ENCODE measurements at regions of chr12 and their contacts with region 1.

Region 1: DNA sequence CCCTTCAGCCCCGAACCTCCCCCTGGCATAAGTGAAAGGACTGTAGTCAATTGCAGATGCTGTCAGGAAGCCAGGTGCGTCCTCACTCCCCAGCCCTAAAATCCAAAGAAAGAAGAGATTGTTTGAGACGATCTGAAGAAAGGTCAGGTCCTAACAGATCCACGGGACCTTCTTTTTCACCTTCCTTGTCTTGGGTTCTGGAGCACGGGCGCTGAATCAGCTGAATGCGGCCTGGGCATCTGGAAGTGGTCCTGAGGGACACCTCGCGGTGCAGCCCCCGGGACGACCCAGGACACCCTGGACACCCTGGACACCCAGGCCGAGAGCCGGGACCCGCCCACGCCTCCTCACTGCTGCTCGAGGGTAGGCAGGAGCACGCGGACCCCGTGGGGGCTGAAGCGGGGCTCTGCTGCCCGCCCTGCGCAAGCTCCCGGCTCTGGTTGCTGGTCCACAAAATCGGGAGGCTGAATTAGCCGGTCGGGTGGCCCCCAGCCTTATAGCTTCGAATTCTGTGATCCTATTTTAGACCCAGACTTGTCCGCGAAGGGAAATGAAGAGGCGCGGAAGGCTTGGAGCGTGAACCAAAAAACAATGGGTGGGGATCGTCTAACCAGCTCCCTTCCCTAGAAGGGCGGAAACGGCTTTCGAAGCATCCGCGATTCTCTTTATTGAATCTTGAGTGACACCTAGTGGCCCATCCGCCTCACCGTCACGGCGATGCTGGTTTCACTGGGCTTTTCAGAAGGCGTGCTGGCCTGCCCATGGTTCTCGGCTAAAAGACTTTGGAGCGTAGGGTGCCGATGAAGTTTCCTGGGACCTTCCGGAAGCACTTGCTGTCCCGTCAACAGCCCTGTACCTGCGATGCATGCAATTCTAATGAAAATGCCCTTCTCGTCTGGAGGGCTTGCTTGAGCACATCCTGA is 46.4 kb upstream of the PLXNC1 start:
- DNase-seq: peak; percentile 66 to 90
- ATAC-seq: peak; percentile 78 to 90
- H3K4me3 ChIP-seq: peak overlapping the region; percentile 61
- H3K27ac ChIP-seq: peak overlapping the region; percentile 77 to 85
- H3K4me1 ChIP-seq: peaks cover 28% of the 10 kb centered on the region; the same call in 2 of the 3 replicates
- CTCF ChIP-seq: peak; percentile 77
- EP300 ChIP-seq: no peak
- POLR2A ChIP-seq: no peak
- RAD21 ChIP-seq: peak; percentile 93

Region 2: GRCh38 chr12:93502802-93503623 is 599.0 kb before region 1 on chr12:
- CTCF ChIA-PET with region 1: interaction called, 334 read pairs
- POLR2A ChIA-PET with region 1: interaction called, 9 read pairs
- DNase-seq: peak in 1 of 2 experiments; percentile 52
- ATAC-seq: peak; percentile 39 to 70; a peak in 3 of 6 replicates
- H3K4me3 ChIP-seq: no peak overlapping the region
- H3K27ac ChIP-seq: no peak overlapping the region
- H3K4me1 ChIP-seq: no peaks in the 10 kb centered on the region
- CTCF ChIP-seq: peak; percentile 97
- EP300 ChIP-seq: no peak
- POLR2A ChIP-seq: no peak
- RAD21 ChIP-seq: peak; percentile 94 to 96

Region 3: GRCh38 chr12:93569656-93570551 is 532.1 kb before region 1 on chr12:
- CTCF ChIA-PET with region 1: interaction called, 232 read pairs
- POLR2A ChIA-PET with region 1: interaction called, 15 read pairs
- DNase-seq: peak; percentile 91 to 96
- ATAC-seq: peak; percentile 77 to 83
- H3K4me3 ChIP-seq: peak overlapping the region; percentile 64
- H3K27ac ChIP-seq: peak overlapping the region; percentile 94
- H3K4me1 ChIP-seq: peaks cover 15% of the 10 kb centered on the region
- CTCF ChIP-seq: peak; percentile 82
- EP300 ChIP-seq: no peak
- POLR2A ChIP-seq: no peak
- RAD21 ChIP-seq: peak; percentile 87 to 96

Region 4: GRCh38 chr12:93733358-93733757 is 368.6 kb before region 1 on chr12:
- CTCF ChIA-PET with region 1: interaction called, 29 read pairs
- POLR2A ChIA-PET with region 1: no interaction called
- DNase-seq: peak in 1 of 2 experiments; percentile 49
- ATAC-seq: peak; percentile 50 to 76; a peak in 4 of 6 replicates
- H3K4me3 ChIP-seq: no peak overlapping the region
- H3K27ac ChIP-seq: no peak overlapping the region
- H3K4me1 ChIP-seq: peaks cover 13% of the 10 kb centered on the region; the same call in 1 of the 3 replicates
- CTCF ChIP-seq: no peak
- EP300 ChIP-seq: no peak
- POLR2A ChIP-seq: no peak
- RAD21 ChIP-seq: no peak

Region 5: DNA sequence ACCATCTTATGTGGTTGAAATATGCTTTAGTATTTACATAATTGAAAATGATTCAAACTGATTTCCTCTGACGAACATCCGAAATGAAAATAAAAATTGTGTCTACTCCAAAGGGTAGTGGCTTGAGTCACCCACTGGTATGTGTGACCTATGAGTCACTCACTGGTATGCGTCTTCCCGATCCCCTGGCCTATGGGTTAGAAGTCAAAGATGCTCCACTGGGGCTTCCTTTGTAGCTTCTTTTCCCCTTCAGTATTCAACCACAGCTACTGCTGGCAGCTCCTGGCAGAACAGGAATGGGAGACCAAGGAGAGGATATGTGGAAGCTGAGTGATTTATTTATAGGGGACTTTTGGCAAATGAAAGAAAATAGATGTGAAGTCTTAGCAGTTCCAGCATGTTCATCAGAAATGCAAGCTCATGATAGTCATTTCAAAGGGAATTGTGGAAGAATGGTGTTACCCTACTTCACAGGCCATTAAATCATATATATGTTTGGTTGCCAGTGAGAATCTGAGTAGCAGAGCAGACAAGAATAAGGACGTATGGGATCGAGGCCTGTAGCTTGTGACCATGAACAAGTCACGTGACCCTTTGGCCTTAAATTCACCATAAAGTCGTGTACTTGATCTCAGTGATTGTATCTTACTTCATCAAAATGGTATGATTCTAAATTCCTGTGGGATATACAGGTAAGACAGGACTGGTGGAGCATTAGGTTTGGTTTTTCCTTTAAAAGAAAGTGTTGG is 316.6 kb before region 1 on chr12:
- CTCF ChIA-PET with region 1: interaction called, 44 read pairs
- POLR2A ChIA-PET with region 1: interaction called, 8 read pairs
- DNase-seq: peak; percentile 86 to 96
- ATAC-seq: peak; percentile 98
- H3K4me3 ChIP-seq: no peak overlapping the region; the same call in 2 of the 3 replicates
- H3K27ac ChIP-seq: peak overlapping the region; percentile 84 to 89
- H3K4me1 ChIP-seq: peaks cover 52% of the 10 kb centered on the region
- CTCF ChIP-seq: no peak
- EP300 ChIP-seq: peak; percentile 83 to 89; a peak in 4 of 5 replicates
- POLR2A ChIP-seq: no peak
- RAD21 ChIP-seq: peak; percentile 34 to 58

Region 6: DNA sequence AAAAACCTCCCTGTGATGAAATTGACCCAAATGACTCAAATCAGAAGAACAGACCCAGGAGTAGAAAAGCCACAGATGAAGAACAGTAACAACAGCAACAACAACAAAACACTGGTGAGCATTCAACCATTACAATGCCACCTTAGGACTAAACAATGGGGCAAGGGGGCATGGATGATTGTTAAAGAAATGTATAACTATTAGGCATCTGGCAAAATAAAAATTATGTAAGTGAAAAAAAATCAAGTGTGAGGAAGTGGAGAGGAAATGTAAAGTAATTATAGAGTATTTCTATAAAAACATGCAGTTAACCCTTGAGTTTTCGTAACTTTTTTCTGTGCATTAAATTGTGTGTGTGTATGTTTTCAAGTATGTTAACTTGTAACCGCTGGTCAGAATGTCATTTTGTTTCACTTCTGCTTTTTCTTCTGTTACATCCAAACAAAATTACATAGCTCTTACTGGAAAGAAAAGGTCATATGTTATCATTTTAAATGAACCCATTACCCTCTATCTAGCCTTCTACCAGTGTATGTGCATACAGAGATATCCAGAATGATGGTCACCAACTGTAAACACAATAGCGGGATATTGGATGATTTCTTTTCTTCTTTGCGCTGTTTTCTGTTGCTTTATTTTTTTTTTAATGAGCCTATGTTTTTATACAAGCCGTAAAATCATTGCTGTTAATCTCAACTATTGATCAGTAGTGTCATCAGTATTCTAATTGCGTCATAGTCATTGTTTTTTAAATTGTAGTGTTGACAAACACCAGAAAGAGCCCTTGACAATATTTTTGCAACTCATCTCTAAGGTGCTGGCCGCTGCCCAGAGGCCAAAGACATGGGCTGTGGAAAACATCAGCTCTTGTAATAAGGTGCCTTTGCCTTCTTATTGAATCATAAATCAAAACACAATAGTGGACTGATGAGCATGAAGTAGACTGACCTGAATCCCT is 254.2 kb before region 1 on chr12:
- CTCF ChIA-PET with region 1: no interaction called
- POLR2A ChIA-PET with region 1: no interaction called
- DNase-seq: no peak
- ATAC-seq: no peak
- H3K4me3 ChIP-seq: no peak overlapping the region
- H3K27ac ChIP-seq: no peak overlapping the region
- H3K4me1 ChIP-seq: no peaks in the 10 kb centered on the region
- CTCF ChIP-seq: no peak
- EP300 ChIP-seq: no peak
- POLR2A ChIP-seq: no peak
- RAD21 ChIP-seq: no peak

Region 7: DNA sequence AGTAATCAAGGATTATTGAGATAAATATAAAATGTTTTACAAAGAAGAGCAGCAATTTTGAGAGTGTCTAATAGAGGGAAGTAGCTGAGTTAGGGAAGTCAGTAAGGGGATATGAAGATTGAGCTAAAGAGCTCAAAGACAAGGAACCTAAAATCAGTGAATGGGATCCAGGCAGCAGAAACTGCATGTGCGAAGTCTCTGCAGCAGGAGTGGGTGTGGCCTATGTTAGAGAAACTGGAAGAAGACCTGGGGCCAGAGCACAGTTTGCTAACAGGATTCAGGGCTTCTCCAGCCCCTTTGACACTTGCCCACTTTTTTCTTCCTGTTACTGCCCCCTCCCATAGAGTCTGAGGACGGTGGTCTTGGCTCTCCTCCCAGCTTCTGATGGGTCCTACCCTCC is 10.1 kb after region 1 on chr12:
- CTCF ChIA-PET with region 1: interaction called, 61 read pairs
- POLR2A ChIA-PET with region 1: no interaction called
- DNase-seq: no peak
- ATAC-seq: no peak
- H3K4me3 ChIP-seq: no peak overlapping the region
- H3K27ac ChIP-seq: no peak overlapping the region
- H3K4me1 ChIP-seq: peaks cover 7% of the 10 kb centered on the region; the same call in 1 of the 3 replicates
- CTCF ChIP-seq: no peak
- EP300 ChIP-seq: no peak
- POLR2A ChIP-seq: no peak
- RAD21 ChIP-seq: no peak

Region 8: DNA sequence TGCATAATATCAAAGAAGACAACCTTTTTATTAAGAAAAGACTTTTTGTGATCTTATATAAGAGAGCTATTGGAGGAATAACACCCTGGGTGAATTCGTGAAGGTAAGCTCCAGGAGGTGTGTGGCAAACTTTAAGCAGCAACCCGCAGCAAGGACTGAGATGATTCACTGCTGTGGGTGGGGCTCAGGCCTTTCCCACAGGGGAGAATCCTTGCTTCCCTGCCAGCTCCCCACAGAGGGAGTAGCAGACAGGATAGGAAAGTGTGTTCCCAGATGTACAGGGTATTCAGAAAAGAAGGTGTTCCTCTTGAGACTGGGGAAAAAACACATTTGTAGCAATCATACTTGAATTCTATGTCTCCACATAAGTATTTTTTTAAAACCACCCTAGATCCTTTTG is 892.3 kb after region 1 on chr12:
- CTCF ChIA-PET with region 1: no interaction called
- POLR2A ChIA-PET with region 1: no interaction called
- DNase-seq: peak; percentile 46 to 57
- ATAC-seq: peak; percentile 91 to 96
- H3K4me3 ChIP-seq: no peak overlapping the region
- H3K27ac ChIP-seq: no peak overlapping the region
- H3K4me1 ChIP-seq: peaks cover 11% of the 10 kb centered on the region
- CTCF ChIP-seq: no peak
- EP300 ChIP-seq: no peak
- POLR2A ChIP-seq: no peak
- RAD21 ChIP-seq: no peak

Measured in A549 (cell line).